ENCODE measurements at regions of chr4 and their contacts with region 1.

Region 1: GRCh38 chr4:142671516-142671915 is 174.6 kb downstream of the INPP4B start:
- DNase-seq: no peak
- ATAC-seq: no peak
- H3K4me3 ChIP-seq: no peak overlapping the region
- H3K4me3 Mint-ChIP-seq: no peak overlapping the region
- H3K27ac ChIP-seq: no peak overlapping the region
- H3K27ac Mint-ChIP-seq: no peak overlapping the region
- H3K4me1 ChIP-seq: no peaks in the 10 kb centered on the region
- H3K4me1 Mint-ChIP-seq: peaks cover 4% of the 10 kb centered on the region
- H3K27me3 ChIP-seq: no peaks in the 10 kb centered on the region
- H3K27me3 Mint-ChIP-seq: no peaks in the 10 kb centered on the region
- CTCF ChIP-seq: no peak

Region 2: DNA sequence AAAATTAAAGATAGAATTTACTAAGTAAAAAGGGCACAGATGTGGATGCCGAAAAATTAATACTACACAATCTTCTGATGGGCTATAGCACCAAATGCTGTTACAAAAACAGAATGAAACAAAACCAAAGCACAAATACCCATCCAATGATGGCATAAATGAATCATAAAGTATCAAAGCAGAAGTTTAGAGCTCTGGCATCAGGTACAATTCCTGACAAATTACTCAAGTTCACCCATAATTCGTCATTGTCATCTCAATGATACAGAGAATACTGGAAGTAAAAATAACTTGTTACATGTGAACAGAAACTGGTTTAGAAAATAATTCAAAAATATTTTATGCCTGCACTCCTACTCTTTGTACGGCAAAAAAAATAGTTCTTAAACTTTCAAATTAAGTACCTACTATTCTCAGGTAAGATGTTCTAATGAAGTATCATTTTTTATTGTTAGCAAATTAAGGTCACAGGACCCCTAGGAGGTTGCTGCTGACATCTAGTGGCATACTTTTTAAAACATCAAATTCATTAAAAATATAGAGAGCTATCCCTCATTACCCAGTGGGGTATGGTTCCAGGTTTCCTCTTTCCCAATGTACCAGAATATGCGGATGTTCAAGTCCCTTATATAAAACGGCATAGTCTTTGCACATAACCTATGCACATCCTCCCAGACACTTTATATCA is 48.5 kb after region 1 on chr4:
- CTCF ChIA-PET with region 1: interaction called, 5 read pairs
- POLR2A ChIA-PET with region 1: no interaction called
- intact Hi-C with region 1: loop called in 1 of 2 experiments (anchors 1 kb)
- DNase-seq: peak in 2 of 9 experiments; percentile 48 to 56
- ATAC-seq: peak; percentile 49
- H3K4me3 ChIP-seq: no peak overlapping the region
- H3K4me3 Mint-ChIP-seq: no peak overlapping the region
- H3K27ac ChIP-seq: no peak overlapping the region
- H3K27ac Mint-ChIP-seq: no peak overlapping the region
- H3K4me1 ChIP-seq: peaks cover 3% of the 10 kb centered on the region
- H3K4me1 Mint-ChIP-seq: peaks cover 13% of the 10 kb centered on the region
- H3K27me3 ChIP-seq: no peaks in the 10 kb centered on the region
- H3K27me3 Mint-ChIP-seq: no peaks in the 10 kb centered on the region
- CTCF ChIP-seq: peak; percentile 69